Lower lobe of right lung (tissue), 2 donors: ENCODE measurements at regions of chr1 and their contacts with region 1.

Region 1: DNA sequence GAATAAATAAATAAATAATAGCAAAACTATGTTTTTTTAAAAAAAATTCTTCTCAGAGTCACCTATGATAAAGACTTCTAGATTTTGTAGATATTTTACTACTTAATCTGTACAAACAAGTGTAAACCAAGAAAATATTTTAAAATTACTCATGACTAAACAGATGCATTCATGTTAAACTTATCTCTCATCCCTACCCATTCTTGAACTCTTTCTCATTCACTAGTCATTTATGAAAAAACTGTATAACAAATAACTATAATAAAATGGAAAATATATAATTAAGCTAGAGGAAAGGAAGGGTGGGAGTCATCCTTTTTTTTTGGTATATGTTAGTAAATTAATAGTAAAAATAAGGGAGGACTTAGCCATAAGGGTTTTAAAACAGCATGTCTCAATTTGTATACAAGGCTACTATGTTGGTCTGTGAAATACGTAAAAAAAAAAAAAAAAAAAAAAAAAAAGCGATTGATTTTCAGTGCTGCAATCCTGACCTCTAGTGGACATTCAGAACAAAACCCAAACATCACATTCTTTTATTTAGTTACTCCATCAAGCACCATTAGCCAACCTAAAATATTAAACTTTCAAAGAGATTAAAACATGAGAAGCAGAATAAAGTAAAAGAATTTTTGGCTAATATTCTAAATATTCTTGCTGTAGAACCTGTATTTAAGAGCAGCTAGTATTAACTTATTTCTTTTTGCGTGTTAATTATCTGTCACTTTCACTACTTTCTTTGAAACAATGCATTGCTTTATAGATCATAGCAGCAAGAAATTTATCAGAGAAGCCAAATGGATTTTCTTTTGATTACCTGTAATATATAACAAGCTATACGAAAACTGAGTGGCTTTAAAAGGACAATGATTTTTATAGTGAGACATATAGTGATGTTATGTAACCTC is 255.8 kb upstream of the CACYBP start:
- DNase-seq: no peak
- ATAC-seq: peak in 1 of 2 donors; percentile 45
- H3K4me3 ChIP-seq: no peak overlapping the region
- H3K27ac ChIP-seq: no peak overlapping the region
- H3K4me1 ChIP-seq: no peaks in the 10 kb centered on the region
- H3K27me3 ChIP-seq: no peaks in the 10 kb centered on the region
- CTCF ChIP-seq: peak; percentile 63

Region 2: DNA sequence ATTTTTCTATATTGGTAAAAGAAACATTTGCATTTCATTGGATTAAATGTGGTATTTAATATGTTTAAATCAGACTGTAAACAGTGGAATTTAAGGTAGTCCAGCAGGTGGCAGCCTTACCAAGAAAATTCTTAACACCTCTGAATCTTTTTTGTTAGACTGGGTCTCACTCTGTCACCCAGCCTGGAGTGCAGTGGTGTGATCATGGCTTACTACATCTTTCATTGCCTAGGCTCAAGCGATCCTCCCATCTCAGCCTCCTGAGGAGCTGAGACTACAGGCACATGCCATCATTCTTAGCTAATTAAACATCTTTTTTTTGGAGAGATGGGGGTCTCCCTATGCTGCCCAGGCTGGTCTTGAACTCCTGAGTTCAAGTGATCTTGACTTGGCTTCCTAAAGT is 485.8 kb before region 1 on chr1:
- intact Hi-C with region 1: loop called (anchors 5 kb)
- DNase-seq: no peak
- ATAC-seq: peak; percentile 52 to 57
- H3K4me3 ChIP-seq: no peak overlapping the region
- H3K27ac ChIP-seq: no peak overlapping the region
- H3K4me1 ChIP-seq: no peaks in the 10 kb centered on the region
- H3K27me3 ChIP-seq: no peaks in the 10 kb centered on the region
- CTCF ChIP-seq: peak; percentile 64

Region 3: DNA sequence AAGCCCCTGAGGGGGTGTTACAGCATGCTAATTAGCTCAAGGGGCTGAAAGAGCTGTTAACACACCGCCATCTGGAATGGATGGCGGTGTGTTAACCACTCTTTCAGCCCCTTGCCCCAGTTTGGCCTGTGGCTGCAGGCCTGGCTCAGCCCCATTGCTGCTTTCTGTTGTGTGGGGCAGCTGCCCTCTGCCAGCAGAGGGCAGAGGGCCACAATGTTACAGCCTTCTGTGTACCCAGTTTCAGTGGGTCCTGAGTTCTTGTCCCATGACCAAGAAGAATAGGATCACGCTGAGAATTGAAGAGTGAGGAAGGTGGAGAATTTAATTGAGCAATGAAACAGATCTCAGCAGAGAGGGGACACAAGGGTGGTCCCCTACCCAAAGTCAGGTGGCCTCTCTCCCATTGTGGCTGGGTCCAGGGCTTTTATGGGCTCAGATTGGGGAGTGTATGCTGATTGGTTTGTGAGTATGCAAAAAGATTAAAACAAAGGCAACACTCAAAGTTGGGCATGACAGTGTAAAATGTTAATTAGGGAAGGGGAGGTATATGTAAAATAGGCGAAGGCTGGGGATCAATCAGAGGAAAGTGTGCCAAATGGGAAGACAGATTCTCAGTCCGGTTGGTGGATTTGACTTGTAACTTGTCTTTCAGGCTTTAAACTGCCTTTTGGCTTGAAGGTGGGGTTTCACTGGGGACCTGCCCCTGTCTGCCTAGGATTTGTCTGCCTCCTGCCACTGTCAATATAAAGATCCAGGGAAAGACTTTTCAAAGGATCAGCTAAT is 442.4 kb before region 1 on chr1:
- intact Hi-C with region 1: no loop called
- DNase-seq: no peak
- ATAC-seq: no peak
- H3K4me3 ChIP-seq: no peak overlapping the region
- H3K27ac ChIP-seq: no peak overlapping the region
- H3K4me1 ChIP-seq: no peaks in the 10 kb centered on the region
- H3K27me3 ChIP-seq: no peaks in the 10 kb centered on the region
- CTCF ChIP-seq: no peak

Region 4: DNA sequence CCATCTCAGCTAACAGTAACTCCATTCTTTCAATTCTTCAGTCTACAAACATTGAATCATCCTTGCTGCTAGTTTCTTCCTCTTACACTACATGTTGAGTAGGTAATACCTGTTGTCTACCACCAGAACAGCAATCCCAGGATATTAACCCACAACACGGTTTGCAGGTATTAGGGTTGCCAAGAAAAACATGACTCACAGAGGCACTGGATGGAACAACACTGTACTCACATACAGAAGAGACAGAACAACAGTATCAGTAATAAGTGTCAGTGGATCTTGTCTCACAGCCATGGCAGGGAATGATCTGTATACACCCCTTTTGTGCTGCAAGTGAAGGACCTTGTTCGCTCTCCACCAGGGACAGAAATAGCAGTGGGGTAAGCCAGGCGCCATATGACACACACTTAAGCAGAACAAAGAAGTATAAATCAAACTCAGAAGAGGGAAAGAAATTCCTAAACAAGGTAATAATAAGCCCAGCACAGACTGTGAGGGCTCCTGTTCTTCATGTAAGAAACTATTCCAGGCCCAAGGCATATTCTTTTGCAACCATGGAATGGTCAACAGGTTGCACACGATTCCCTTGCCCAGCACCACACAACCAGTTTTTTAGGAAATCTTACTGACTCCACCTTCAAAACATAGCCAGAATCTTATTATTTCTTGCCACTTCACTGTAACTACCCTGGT is 83.9 kb before region 1 on chr1:
- intact Hi-C with region 1: no loop called
- DNase-seq: no peak
- ATAC-seq: no peak
- H3K4me3 ChIP-seq: no peak overlapping the region
- H3K27ac ChIP-seq: no peak overlapping the region
- H3K4me1 ChIP-seq: no peaks in the 10 kb centered on the region
- H3K27me3 ChIP-seq: no peaks in the 10 kb centered on the region
- CTCF ChIP-seq: no peak